IMR-90 (cell line): ENCODE measurements at regions of chr14 and their contacts with region 1.

Region 1: DNA sequence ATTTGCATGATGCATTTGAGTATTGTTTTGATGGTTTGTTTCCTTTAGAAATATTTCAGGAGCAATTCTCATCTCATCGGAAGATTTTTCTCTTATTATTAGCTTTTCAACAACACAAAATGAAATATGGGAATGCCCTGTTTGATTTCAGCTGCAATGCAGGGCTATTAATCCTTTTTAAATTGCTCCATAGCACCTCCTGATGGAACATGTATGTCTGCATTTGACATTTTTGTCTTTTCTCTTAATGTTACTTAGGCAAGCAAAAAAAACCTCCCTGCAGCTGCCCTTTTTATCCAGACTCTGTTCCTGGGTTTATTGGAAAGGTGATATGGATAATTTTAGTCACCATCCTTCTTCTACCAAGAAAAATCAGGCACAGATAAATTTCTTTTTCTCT is 895.8 kb downstream of the RPS29 start:
- DNase-seq: peak; percentile 10
- ATAC-seq: no peak
- H3K4me3 ChIP-seq: no peak overlapping the region
- H3K27ac ChIP-seq: no peak overlapping the region
- H3K4me1 ChIP-seq: peaks cover 4% of the 10 kb centered on the region
- H3K27me3 ChIP-seq: no peaks in the 10 kb centered on the region
- CTCF ChIP-seq: no peak; the same call in 1 of the 2 replicates
- POLR2A ChIP-seq: no peak
- RAD21 ChIP-seq: peak; percentile 33; the same call in 1 of the 2 replicates

Region 2: DNA sequence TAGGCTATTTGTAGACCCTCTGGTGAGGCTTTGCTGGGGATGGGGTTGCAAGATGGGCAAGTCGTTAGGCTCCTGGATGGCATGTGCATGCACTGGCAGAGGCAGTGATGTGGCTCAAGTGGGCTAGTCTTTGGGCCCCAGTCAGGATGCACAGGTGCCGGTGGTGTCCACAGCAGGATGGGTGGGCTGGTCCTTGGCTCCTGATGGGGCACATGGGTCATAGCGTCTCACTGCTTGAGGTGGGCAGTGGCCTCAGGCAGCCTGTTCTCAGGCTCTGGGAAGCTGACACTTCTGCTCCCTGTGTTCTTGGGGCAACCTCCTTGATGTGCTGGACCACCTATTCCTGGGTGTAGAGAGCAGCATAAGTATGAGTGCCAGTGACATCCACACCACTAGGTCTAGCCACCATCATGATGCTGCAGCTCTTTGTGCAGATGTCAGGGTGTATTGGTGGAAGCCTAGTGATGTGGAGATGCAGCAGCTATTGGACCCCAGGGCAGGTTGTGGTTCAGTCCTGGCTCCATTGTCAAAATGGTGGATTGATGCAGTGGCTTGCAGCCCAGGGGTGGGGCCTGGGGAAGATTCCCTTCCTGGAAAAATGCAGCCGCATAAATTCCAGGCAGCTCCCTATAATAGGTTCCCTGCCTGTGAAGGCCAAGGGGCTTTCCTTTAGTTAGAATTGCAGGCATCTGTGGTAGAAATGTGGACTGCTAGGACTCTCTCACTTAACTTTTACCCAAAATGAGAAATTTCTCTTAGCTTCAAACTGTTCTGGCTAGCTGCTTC is 272.4 kb before region 1 on chr14:
- CTCF ChIA-PET with region 1: no interaction called
- POLR2A ChIA-PET with region 1: no interaction called
- dilution Hi-C with region 1: no loop called
- in situ Hi-C with region 1: no loop called
- intact Hi-C with region 1: no loop called
- DNase-seq: no peak
- ATAC-seq: no peak
- H3K4me3 ChIP-seq: no peak overlapping the region
- H3K27ac ChIP-seq: no peak overlapping the region
- H3K4me1 ChIP-seq: no peaks in the 10 kb centered on the region
- H3K27me3 ChIP-seq: no peaks in the 10 kb centered on the region
- CTCF ChIP-seq: no peak
- POLR2A ChIP-seq: no peak
- RAD21 ChIP-seq: no peak

Region 3: GRCh38 chr14:48584031-48584430 is 106.3 kb before region 1 on chr14:
- CTCF ChIA-PET with region 1: no interaction called
- POLR2A ChIA-PET with region 1: no interaction called
- dilution Hi-C with region 1: no loop called
- in situ Hi-C with region 1: no loop called
- intact Hi-C with region 1: no loop called
- DNase-seq: peak; percentile 88
- ATAC-seq: peak; percentile 80
- H3K4me3 ChIP-seq: no peak overlapping the region
- H3K27ac ChIP-seq: no peak overlapping the region
- H3K4me1 ChIP-seq: no peaks in the 10 kb centered on the region
- H3K27me3 ChIP-seq: no peaks in the 10 kb centered on the region
- CTCF ChIP-seq: no peak
- POLR2A ChIP-seq: no peak
- RAD21 ChIP-seq: no peak

Region 4: DNA sequence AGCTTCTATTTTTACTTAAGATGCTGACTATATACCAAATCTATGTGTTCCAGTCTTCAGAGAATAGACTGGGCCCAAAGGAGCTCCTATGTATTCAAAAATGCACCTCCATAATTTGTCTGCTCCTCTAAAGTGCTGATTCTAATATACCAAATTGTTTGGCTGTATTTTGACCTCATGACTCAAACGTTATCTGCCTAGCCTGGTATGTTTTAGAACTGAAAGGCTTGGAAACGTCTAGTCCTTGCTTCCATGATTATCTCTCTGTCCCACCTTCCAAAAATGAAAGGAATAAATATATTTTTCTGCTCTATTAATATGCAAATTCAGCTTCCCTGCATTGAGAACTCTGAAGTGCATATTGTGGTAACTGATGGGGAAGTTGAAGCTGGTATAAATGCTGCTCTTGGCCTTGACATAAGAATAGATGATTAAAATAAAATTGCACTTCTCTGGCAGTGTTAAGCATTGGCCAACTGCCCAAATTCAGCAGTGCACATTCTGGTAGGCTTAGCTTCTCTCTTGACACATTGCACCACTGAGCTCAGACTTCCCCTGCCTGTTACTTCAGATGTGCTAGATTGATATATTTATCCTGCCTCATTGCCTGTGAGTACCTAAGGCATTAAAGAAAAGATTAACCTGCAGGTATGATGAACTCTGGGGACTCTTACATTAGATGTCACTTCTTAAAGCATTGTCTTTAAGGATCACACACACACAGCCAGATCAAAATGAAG is 13.5 kb after region 1 on chr14:
- CTCF ChIA-PET with region 1: interaction called, 6 read pairs
- POLR2A ChIA-PET with region 1: interaction called, 10 read pairs
- dilution Hi-C with region 1: no loop called
- in situ Hi-C with region 1: no loop called
- intact Hi-C with region 1: no loop called
- DNase-seq: no peak
- ATAC-seq: no peak
- H3K4me3 ChIP-seq: no peak overlapping the region
- H3K27ac ChIP-seq: no peak overlapping the region
- H3K4me1 ChIP-seq: no peaks in the 10 kb centered on the region
- H3K27me3 ChIP-seq: no peaks in the 10 kb centered on the region
- CTCF ChIP-seq: no peak
- POLR2A ChIP-seq: no peak
- RAD21 ChIP-seq: no peak